ENCODE measurements at regions of chr19 and their contacts with region 1.

Region 1: DNA sequence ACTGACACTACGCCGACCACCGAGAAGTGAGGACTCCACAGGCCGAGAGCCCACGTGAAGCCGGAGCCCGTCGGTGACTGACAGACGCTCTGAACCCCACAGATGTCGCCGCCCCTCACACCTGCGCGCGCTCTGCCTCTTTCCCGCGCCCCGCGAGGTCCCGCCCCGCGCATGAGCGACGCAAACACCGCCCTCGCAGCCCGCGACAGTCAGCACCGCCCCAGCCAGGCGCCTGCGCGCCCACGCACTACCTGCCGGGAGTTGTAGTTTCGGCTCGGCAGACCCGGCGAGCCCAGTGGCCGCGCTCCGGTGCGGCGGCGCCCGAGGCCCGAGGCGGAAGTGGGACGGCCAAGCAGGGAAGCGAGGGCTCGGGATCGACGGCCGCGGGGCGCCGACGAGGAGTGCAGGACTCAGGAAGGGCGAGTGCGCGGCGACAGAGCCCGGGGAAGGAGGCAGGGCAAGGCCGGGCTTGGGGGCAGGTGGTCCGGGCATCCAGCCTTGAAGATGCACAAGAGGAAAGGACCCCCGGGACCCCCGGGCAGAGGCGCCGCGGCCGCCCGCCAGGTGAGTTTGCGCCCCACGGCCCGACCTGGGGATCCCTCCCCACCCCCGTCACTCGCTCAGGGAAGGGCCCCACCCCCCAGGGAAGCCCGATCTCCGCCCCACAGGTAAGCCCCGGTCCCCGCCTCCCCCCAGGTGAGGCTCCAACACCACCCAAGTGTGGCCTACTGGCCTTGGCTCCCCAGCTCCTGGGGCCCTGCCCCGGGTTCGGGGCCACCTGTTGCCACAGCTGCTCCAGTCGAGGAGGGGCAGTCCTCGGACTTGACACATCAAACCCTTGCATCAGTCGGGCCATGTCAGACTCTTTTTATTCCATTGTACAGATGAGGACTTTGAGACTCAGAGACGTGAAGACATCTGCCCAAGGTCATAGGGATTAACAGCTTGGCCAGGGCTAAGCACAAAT is at the starts of genes BRME1 and CC2D1A:
- DNase-seq: peak; percentile 93
- H3K4me3 Mint-ChIP-seq: peak within 1 kb of the TSS; percentile 86
- H3K27ac Mint-ChIP-seq: peak within 1 kb of the TSS; percentile 91
- H3K4me1 Mint-ChIP-seq: peaks cover 11% of the 10 kb centered on the region
- H3K27me3 Mint-ChIP-seq: no peaks in the 10 kb centered on the region
- total RNA-seq, gene BRME1: 16.6 and 20.5 TPM in 2 replicates
- total RNA-seq, gene CC2D1A: 43.9 and 45.6 TPM in 2 replicates

Region 2: GRCh38 chr19:13872695-13873389 is 33.4 kb before region 1 on chr19:
- intact Hi-C with region 1: no loop called
- DNase-seq: peak; percentile 33
- H3K4me3 Mint-ChIP-seq: peak overlapping the region; percentile 67
- H3K27ac Mint-ChIP-seq: no peak overlapping the region
- H3K4me1 Mint-ChIP-seq: peaks cover 4% of the 10 kb centered on the region
- H3K27me3 Mint-ChIP-seq: peaks cover 29% of the 10 kb centered on the region

Region 3: GRCh38 chr19:13920940-13921761 is 14.9 kb after region 1 on chr19:
- intact Hi-C with region 1: loop called (anchors 1 kb)
- DNase-seq: no peak
- H3K4me3 Mint-ChIP-seq: no peak overlapping the region
- H3K27ac Mint-ChIP-seq: peak overlapping the region; percentile 37
- H3K4me1 Mint-ChIP-seq: no peaks in the 10 kb centered on the region
- H3K27me3 Mint-ChIP-seq: no peaks in the 10 kb centered on the region

Region 4: DNA sequence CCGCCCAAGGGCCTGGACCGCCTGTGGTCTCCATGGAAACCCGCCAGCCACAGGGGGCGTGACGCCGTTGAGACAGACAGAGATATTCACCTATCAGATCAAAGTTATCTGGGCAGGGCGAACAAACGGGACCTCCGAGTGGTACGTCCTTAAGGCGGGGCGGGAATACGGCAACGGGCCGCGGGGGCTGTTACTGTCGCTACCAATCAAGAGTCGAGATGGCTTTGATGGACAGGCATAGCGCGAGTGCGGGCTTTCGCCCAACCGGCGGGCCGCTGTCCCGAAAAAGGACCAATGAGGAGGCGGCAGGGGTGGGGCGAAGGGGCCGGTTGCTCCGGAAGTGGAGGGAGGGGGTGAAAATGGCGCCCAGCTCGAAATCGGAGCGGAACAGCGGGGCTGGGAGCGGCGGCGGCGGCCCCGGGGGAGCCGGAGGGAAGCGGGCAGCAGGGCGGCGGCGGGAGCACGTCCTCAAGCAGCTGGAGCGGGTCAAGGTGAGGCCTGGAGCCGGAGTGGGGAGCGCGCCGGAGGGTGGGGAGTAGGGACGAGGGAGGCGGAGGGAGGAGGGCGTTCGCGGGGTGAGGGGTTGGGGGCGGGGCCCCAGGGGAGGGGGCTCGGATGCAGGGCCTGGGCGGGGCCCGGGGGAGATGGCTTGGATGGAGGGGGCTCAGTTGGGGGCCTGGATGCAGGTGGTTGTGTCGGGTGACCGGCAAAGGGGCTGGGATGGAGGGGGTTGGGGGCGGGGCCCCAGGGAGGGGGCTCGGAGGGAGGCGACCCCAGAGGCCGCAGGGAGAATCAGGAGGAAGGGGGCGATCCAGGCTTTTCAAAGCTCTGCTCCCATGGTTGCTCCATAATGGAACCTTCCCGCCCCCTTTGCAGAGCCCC is 46.2 kb after region 1 on chr19 and contains the start of gene DCAF15:
- intact Hi-C with region 1: loop called (anchors 1 kb)
- DNase-seq: peak; percentile 99
- H3K4me3 Mint-ChIP-seq: peak within 1 kb of the TSS; percentile 96
- H3K27ac Mint-ChIP-seq: peak within 1 kb of the TSS; percentile 86
- H3K4me1 Mint-ChIP-seq: peaks cover 17% of the 10 kb centered on the region
- H3K27me3 Mint-ChIP-seq: no peaks in the 10 kb centered on the region
- total RNA-seq, gene DCAF15: 57.8 and 61.5 TPM in 2 replicates

Region 5: DNA sequence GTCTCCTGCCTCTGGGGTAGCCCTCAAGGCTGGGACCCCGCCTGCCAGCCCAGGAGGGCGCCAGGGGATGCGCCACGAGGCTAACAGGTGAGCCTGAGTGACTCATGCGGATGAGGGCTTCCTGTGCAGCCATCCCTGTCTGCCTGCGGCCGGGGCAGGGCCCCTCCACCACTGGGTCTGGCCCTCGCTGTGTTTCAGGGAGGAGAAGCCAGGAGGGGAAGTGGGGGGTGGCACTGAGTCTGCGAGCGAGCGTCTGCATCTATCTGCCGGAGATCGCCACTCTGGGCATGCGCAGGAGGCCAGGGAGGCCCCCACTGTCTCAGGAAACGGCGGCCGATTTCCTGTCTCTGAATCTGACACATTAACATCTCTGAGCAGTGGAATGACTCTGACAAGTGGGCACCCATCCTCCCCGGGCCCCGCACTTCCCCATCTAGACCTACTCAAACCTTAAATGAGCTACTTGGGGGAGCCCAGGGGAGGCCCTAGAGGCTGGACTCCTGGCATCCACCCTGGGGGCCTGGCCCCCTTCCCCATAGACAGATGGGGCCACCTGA is 80.2 kb after region 1 on chr19:
- intact Hi-C with region 1: loop called (anchors 1 kb)
- DNase-seq: peak; percentile 96
- H3K4me3 Mint-ChIP-seq: peak overlapping the region; percentile 56
- H3K27ac Mint-ChIP-seq: peak overlapping the region; percentile 88
- H3K4me1 Mint-ChIP-seq: peaks cover 48% of the 10 kb centered on the region
- H3K27me3 Mint-ChIP-seq: no peaks in the 10 kb centered on the region

Region 6: DNA sequence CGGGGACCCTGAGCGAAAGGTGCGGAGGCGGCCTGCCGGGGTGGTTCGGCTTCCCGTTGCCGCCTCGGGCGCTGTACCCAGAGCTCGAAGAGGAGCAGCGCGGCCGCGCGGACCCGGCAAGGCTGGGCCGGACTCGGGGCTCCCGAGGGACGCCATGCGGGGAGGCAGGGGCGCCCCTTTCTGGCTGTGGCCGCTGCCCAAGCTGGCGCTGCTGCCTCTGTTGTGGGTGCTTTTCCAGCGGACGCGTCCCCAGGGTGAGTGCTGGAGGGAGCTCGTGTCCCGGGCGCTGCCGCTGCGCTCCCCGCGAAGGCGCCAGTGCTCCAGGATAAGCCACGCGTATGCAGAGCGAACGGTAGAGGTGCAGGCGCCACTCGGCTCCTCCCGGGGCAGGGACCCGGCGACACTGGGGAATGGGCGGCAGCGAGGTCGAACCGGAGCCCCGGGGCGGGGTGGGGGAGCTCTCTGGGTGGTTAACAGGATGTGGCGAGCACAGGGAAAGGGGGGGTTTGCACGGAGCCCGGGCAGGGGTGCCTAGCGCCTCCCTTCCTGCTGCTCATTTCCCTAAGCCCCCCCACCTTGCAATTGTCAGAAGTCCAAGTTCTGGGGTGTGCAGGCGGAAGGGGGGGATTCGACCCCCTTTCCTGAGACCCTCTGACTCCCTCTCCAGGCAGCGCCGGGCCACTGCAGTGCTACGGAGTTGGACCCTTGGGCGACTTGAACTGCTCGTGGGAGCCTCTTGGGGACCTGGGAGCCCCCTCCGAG is 125.7 kb after region 1 on chr19 and contains the start of gene IL27RA:
- intact Hi-C with region 1: loop called (anchors 1 kb)
- DNase-seq: peak; percentile 78
- H3K4me3 Mint-ChIP-seq: peak within 1 kb of the TSS; percentile 95
- H3K27ac Mint-ChIP-seq: peak within 1 kb of the TSS; percentile 96
- H3K4me1 Mint-ChIP-seq: peaks cover 13% of the 10 kb centered on the region
- H3K27me3 Mint-ChIP-seq: peaks cover 3% of the 10 kb centered on the region
- total RNA-seq, gene IL27RA: 82.5 and 84.9 TPM in 2 replicates

Measured in activated T-helper 1 cell treated with anti-CD3 and anti-CD28 coated beads, Interleukin-12 subunit alpha, Interleukin-12 subunit beta, Interleukin-2, Interleukin-4 antibody, amounts not matched to agents 30 ng/mL and 10 ng/mL and 1 ng/mL, durations not matched to agents 14 hours and 24 hours and 36 hours (primary cell).